Activated CD4-positive, alpha-beta T cell treated with anti-CD3 and anti-CD28 coated beads for 36 hours (primary cell): ENCODE measurements at regions of chr7 and their contacts with region 1.

Region 1: GRCh38 chr7:98400542-98401340 is at the start of gene BAIAP2L1:
- DNase-seq: peak; percentile 93
- ATAC-seq: peak; percentile 89
- H3K4me3 Mint-ChIP-seq: peak within 1 kb of the TSS; percentile 21
- H3K27ac Mint-ChIP-seq: no peak within 1 kb of the TSS
- H3K4me1 Mint-ChIP-seq: peaks cover 7% of the 10 kb centered on the region
- H3K27me3 Mint-ChIP-seq: peaks cover 20% of the 10 kb centered on the region
- total RNA-seq, gene BAIAP2L1: 2.3 to 3.0 TPM

Region 2: DNA sequence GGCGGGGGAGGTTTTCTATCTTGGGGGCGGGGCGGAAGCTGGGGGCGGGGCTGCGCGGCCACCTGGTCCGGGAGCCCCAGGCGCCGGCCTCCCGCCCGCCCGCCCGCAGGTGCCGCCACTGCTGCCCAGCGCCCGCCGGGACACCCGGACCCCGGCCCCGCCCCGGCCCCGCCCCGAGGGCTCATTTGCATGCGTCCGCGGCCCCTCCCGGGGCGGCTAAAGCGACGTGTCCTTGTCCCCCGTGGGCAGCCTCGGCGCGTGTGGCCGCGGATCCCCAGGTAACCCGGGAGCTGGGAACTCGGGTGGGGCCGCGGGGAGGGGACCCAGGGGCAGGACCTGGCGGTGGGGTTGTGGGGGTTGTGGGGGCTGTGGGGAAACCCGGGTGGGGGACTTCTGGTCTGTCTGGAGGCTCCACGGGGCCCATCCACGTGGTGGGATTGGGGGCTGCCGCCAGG is 189.5 kb before region 1 on chr7 and contains the start of gene BHLHA15:
- CTCF ChIA-PET with region 1: no interaction called
- POLR2A ChIA-PET with region 1: no interaction called
- intact Hi-C with region 1: loop called in 1 of 2 experiments (anchors 2 kb)
- DNase-seq: peak; percentile 53
- ATAC-seq: peak; percentile 31
- H3K4me3 Mint-ChIP-seq: peak within 1 kb of the TSS; percentile 51
- H3K27ac Mint-ChIP-seq: no peak within 1 kb of the TSS
- H3K4me1 Mint-ChIP-seq: peaks cover 3% of the 10 kb centered on the region
- H3K27me3 Mint-ChIP-seq: no peaks in the 10 kb centered on the region
- total RNA-seq, gene BHLHA15: 0.23 to 0.47 TPM

Region 3: DNA sequence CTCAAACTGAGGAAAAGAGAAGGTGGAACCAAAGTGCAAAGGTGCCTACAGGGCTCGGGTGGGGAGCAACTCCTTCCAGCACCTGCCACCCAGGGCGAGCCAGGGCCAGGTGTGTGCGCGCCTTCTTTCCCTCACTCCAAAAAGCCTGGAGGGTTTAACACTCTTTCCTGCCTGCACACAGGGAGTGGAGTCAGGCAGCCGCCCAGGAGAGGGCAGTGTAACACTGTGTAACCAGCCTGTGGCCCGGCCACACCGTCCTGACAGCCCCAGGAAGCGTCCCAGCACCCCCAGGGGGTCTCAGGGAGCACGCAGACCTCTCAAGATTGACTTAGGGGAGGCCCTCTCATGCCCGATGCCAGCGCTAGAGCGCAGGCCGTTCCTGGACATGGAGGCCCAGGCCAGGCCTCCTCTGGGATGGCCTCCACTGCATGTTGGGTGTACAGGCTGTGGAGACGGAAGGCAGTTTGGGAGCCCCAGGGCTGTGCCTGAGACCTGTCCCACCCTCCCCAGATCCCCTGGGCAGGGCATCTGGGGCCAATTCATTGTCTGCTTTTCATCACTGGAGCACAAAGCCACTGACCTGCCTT is 105.9 kb before region 1 on chr7:
- CTCF ChIA-PET with region 1: no interaction called
- POLR2A ChIA-PET with region 1: no interaction called
- intact Hi-C with region 1: loop called in 1 of 2 experiments (anchors 1 kb)
- DNase-seq: peak; percentile 67
- ATAC-seq: peak; percentile 71
- H3K4me3 Mint-ChIP-seq: no peak overlapping the region
- H3K27ac Mint-ChIP-seq: no peak overlapping the region
- H3K4me1 Mint-ChIP-seq: no peaks in the 10 kb centered on the region
- H3K27me3 Mint-ChIP-seq: no peaks in the 10 kb centered on the region

Region 4: GRCh38 chr7:98641646-98642500 is 241.1 kb after region 1 on chr7:
- CTCF ChIA-PET with region 1: no interaction called
- POLR2A ChIA-PET with region 1: no interaction called
- intact Hi-C with region 1: no loop called
- DNase-seq: no peak
- ATAC-seq: no peak
- H3K4me3 Mint-ChIP-seq: no peak overlapping the region
- H3K27ac Mint-ChIP-seq: no peak overlapping the region
- H3K4me1 Mint-ChIP-seq: no peaks in the 10 kb centered on the region
- H3K27me3 Mint-ChIP-seq: peaks cover 3% of the 10 kb centered on the region